ENCODE measurements at regions of chr6 and their contacts with region 1.

Region 1: GRCh38 chr6:150417899-150418826 is 49.4 kb downstream of the IYD start:
- DNase-seq: peak; percentile 54
- ATAC-seq: peak; percentile 78
- H3K4me3 Mint-ChIP-seq: peak overlapping the region; percentile 57
- H3K27ac Mint-ChIP-seq: peak overlapping the region; percentile 64
- H3K4me1 Mint-ChIP-seq: peaks cover 23% of the 10 kb centered on the region
- H3K27me3 Mint-ChIP-seq: peaks cover 26% of the 10 kb centered on the region

Region 2: GRCh38 chr6:150334790-150335783 is 83.1 kb before region 1 on chr6:
- CTCF ChIA-PET with region 1: no interaction called
- POLR2A ChIA-PET with region 1: no interaction called
- DNase-seq: peak; percentile 31
- ATAC-seq: no peak
- H3K4me3 Mint-ChIP-seq: no peak overlapping the region
- H3K27ac Mint-ChIP-seq: no peak overlapping the region
- H3K4me1 Mint-ChIP-seq: no peaks in the 10 kb centered on the region
- H3K27me3 Mint-ChIP-seq: peaks cover 3% of the 10 kb centered on the region

Region 3: GRCh38 chr6:150439373-150439772 is 21.2 kb after region 1 on chr6:
- CTCF ChIA-PET with region 1: no interaction called
- POLR2A ChIA-PET with region 1: no interaction called
- DNase-seq: no peak
- ATAC-seq: no peak
- H3K4me3 Mint-ChIP-seq: no peak overlapping the region
- H3K27ac Mint-ChIP-seq: no peak overlapping the region
- H3K4me1 Mint-ChIP-seq: no peaks in the 10 kb centered on the region
- H3K27me3 Mint-ChIP-seq: peaks cover 8% of the 10 kb centered on the region

Region 4: DNA sequence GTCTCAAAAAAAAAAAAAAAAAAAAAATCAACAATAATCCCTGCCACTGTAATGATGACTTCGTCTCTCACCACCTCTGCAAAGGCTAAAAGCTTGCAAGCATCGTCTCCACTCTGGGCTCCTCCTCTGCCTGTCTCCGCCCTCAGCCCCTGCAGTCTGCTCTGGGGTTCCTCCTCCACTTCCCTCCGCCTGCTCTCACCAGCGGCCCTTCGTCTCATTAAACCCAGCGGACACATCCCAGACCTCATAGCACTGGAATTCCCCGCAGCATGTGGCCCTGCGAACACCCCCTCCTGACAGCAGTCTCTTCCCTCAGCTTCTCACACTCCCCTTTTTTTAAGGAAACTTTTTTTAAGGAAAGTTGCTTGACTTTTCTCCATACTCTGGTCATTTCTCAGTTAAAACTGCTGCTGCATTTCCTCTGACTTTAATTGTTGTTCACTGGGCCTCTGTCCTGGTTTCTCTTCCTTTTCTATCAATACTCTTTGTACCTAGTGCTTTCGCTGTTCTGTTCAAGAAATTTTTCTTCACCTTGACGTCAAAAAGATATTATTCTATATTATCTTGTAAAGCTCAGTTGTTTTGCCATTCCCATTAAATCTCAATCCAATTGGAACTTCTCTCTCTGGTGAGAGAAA is 110.6 kb after region 1 on chr6:
- CTCF ChIA-PET with region 1: no interaction called
- POLR2A ChIA-PET with region 1: no interaction called
- DNase-seq: no peak
- ATAC-seq: no peak
- H3K4me3 Mint-ChIP-seq: no peak overlapping the region
- H3K27ac Mint-ChIP-seq: no peak overlapping the region
- H3K4me1 Mint-ChIP-seq: no peaks in the 10 kb centered on the region
- H3K27me3 Mint-ChIP-seq: peaks cover 5% of the 10 kb centered on the region

Region 5: DNA sequence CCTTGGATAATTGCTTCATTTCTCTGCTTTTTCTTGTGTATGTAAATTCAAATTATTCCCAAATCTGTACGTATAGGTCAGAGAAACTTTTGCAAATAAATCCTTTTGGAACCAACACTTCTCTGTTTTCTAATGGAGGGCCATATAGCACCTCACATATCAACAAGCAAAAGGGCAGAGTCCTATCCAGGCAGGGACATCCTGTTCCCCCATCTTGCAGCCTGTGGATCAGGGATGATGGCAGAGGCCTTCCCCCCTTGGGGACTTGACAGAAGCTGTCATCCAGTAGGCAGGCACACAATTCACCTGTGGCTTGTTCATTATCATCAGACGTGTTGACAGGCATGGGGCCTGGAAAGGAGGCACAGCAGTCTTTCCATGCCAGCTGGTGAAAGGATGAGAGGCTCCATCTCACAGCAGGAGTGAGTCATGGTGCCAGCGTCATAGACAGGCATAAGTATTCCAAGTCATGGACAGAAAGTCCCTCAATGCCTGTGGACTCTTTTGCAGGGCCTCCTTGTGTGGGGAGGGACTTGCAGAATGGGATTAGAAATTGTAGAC is 149.7 kb after region 1 on chr6:
- CTCF ChIA-PET with region 1: no interaction called
- POLR2A ChIA-PET with region 1: no interaction called
- DNase-seq: no peak
- ATAC-seq: no peak
- H3K4me3 Mint-ChIP-seq: no peak overlapping the region
- H3K27ac Mint-ChIP-seq: no peak overlapping the region
- H3K4me1 Mint-ChIP-seq: no peaks in the 10 kb centered on the region
- H3K27me3 Mint-ChIP-seq: peaks cover 29% of the 10 kb centered on the region

Region 6: GRCh38 chr6:150600301-150601017 is 182.3 kb after region 1 on chr6:
- CTCF ChIA-PET with region 1: interaction called, 18 read pairs
- POLR2A ChIA-PET with region 1: interaction called, 3 read pairs
- DNase-seq: peak; percentile 71
- ATAC-seq: peak; percentile 71
- H3K4me3 Mint-ChIP-seq: peak overlapping the region; percentile 82
- H3K27ac Mint-ChIP-seq: peak overlapping the region; percentile 33
- H3K4me1 Mint-ChIP-seq: peaks cover 17% of the 10 kb centered on the region
- H3K27me3 Mint-ChIP-seq: peaks cover 56% of the 10 kb centered on the region

Measured in activated CD8-positive, alpha-beta T cell treated with anti-CD3 and anti-CD28 coated beads, Interleukin-2, amount 10 ng/mL, durations not matched to agents 7 days and 5 days (primary cell).